H1 (cell line): ENCODE measurements at regions of chr12 and their contacts with region 1.

Region 1: DNA sequence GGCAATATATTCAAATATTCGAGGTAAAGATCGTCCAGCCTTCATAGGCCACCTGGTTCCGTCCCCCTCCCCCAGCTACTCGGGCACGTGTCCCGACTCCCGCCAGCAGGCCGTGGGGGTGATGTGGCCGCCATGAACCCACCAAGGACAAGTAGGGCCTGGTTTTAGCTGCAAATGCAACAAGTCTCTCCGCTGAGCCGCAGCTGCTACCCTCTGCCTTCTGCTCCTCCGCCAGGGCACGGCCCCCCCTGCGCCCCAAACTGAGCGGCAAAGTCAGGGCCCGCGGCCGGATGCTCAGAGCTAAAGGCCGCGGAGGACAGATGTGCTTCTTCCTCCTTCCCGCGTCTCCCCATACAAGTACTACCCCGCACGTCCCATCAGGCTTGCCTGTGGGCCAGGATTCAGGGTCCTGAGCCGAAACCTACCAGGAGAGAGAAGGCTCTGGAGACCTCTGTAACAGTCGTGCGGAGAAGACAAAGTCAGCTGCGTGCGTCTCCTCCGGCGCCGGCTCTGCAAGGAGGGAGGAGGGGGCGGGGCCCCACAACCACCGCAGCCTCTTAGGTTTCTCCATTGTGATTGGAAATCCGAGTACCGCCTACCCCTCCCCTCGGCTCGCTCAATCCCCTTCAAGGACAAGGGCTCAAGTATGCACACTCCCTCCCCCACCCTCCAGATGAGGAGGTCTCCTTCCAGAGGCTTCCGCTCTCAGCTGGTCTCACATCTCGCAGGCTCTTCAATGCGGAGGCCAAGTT is at the start of gene LDHB:
- DNase-seq: peak; percentile 89 to 94
- H3K4me3 ChIP-seq: peak within 1 kb of the TSS; percentile 95 to 99 (median 96)
- H3K27ac ChIP-seq: peak within 1 kb of the TSS; percentile 99
- H3K4me1 ChIP-seq: peaks cover 0 to 10% (median 3%) of the 10 kb centered on the region in 4 experiments; a peak in 4 of 7 replicates
- H3K27me3 ChIP-seq: no peaks in the 10 kb centered on the region
- CTCF ChIP-seq: no peak
- EP300 ChIP-seq: no peak
- POLR2A ChIP-seq: peak; percentile 85 to 99
- RAD21 ChIP-seq: no peak
- total RNA-seq, gene LDHB: 1,716 and 1,781 TPM in 2 replicates

Region 2: GRCh38 chr12:21501379-21501956 is 156.0 kb before region 1 on chr12 and contains the starts of genes GOLT1B and RECQL:
- CTCF ChIA-PET with region 1: no interaction called
- POLR2A ChIA-PET with region 1: interaction called, 23 read pairs
- DNase-seq: peak; percentile 87 to 89
- H3K4me3 ChIP-seq: peak within 1 kb of the TSS; percentile 72 to 93 (median 84)
- H3K27ac ChIP-seq: peak within 1 kb of the TSS; percentile 83
- H3K4me1 ChIP-seq: peaks cover 0 to 6% (median 2%) of the 10 kb centered on the region in 4 experiments; a peak in 4 of 7 replicates
- H3K27me3 ChIP-seq: no peaks in the 10 kb centered on the region
- CTCF ChIP-seq: no peak
- EP300 ChIP-seq: no peak
- POLR2A ChIP-seq: peak; percentile 82 to 83
- RAD21 ChIP-seq: no peak
- total RNA-seq, gene GOLT1B: 37.4 and 38.3 TPM in 2 replicates
- total RNA-seq, gene RECQL: 37.7 and 40.3 TPM in 2 replicates

Region 3: GRCh38 chr12:21631367-21631766 is 26.1 kb before region 1 on chr12:
- CTCF ChIA-PET with region 1: no interaction called
- POLR2A ChIA-PET with region 1: interaction called, 123 read pairs
- DNase-seq: no peak
- H3K4me3 ChIP-seq: no peak overlapping the region
- H3K27ac ChIP-seq: no peak overlapping the region
- H3K4me1 ChIP-seq: no peaks in the 10 kb centered on the region
- H3K27me3 ChIP-seq: no peaks in the 10 kb centered on the region
- CTCF ChIP-seq: no peak
- EP300 ChIP-seq: no peak
- POLR2A ChIP-seq: no peak
- RAD21 ChIP-seq: no peak

Region 4: GRCh38 chr12:21670270-21670669 is 12.8 kb after region 1 on chr12:
- CTCF ChIA-PET with region 1: interaction called, 4 read pairs
- POLR2A ChIA-PET with region 1: interaction called, 13 read pairs
- DNase-seq: no peak
- H3K4me3 ChIP-seq: no peak overlapping the region
- H3K27ac ChIP-seq: no peak overlapping the region
- H3K4me1 ChIP-seq: no peaks in the 10 kb centered on the region
- H3K27me3 ChIP-seq: no peaks in the 10 kb centered on the region
- CTCF ChIP-seq: no peak
- EP300 ChIP-seq: no peak
- POLR2A ChIP-seq: no peak
- RAD21 ChIP-seq: no peak

Region 5: GRCh38 chr12:21683115-21683514 is 25.6 kb after region 1 on chr12:
- CTCF ChIA-PET with region 1: interaction called, 11 read pairs
- POLR2A ChIA-PET with region 1: interaction called, 19 read pairs
- DNase-seq: no peak
- H3K4me3 ChIP-seq: no peak overlapping the region
- H3K27ac ChIP-seq: no peak overlapping the region
- H3K4me1 ChIP-seq: no peaks in the 10 kb centered on the region
- H3K27me3 ChIP-seq: no peaks in the 10 kb centered on the region; a peak in 1 of 7 replicates
- CTCF ChIP-seq: no peak
- EP300 ChIP-seq: no peak
- POLR2A ChIP-seq: no peak
- RAD21 ChIP-seq: no peak

Region 6: GRCh38 chr12:21764065-21764464 is 106.6 kb after region 1 on chr12:
- CTCF ChIA-PET with region 1: no interaction called
- POLR2A ChIA-PET with region 1: no interaction called
- DNase-seq: no peak
- H3K4me3 ChIP-seq: no peak overlapping the region
- H3K27ac ChIP-seq: no peak overlapping the region
- H3K4me1 ChIP-seq: no peaks in the 10 kb centered on the region
- H3K27me3 ChIP-seq: no peaks in the 10 kb centered on the region
- CTCF ChIP-seq: no peak
- EP300 ChIP-seq: no peak
- POLR2A ChIP-seq: no peak
- RAD21 ChIP-seq: no peak